RWPE1 (cell line): ENCODE measurements at regions of chr2 and their contacts with region 1.

Region 1: GRCh38 chr2:186605041-186605440 is 15.2 kb downstream of the ITGAV start:
- DNase-seq: no peak
- H3K27ac ChIP-seq: no peak overlapping the region
- CTCF ChIP-seq: no peak

Region 2: DNA sequence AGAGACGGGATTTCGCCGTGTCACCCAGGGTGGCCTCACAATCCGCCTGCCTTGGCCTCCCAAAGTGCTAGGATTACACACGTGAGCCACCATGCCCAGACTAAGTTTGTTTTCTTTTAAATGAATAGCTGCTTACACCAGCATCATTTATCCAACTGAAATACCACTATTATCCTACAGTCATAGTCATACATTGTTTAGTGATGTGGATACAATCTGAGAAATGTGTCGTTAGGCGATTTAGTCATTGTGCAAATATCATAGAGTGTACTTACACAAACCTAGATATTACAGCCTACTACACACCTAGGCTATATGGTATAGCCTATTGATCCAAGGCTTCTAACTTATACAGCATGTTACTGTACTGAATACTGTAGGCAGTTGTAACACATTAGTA is 108.6 kb before region 1 on chr2:
- CTCF ChIA-PET with region 1: no interaction called
- POLR2A ChIA-PET with region 1: no interaction called
- DNase-seq: no peak
- H3K27ac ChIP-seq: no peak overlapping the region
- CTCF ChIP-seq: no peak

Region 3: DNA sequence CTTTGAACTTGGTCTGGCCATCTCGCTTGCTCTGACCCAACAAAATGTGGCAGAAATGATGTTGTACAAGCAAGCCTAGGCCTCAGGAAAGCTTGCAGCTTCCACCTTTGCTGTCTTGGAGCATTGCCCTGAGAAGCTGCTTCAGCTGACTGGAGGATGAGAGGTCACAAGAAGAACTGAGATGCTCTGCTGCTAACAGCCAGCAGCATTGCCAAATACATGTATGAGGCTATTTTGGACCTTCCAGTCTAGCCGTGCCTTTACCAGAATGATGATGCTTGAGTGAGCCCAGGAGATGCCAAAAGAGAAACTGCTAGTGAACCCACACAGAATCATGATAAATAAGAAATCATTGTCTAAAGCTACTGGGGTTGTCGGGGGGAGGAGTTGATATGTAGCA is 28.4 kb before region 1 on chr2:
- CTCF ChIA-PET with region 1: no interaction called
- POLR2A ChIA-PET with region 1: no interaction called
- DNase-seq: no peak
- H3K27ac ChIP-seq: no peak overlapping the region
- CTCF ChIP-seq: no peak

Region 4: GRCh38 chr2:186664385-186665043 is 59.5 kb after region 1 on chr2:
- CTCF ChIA-PET with region 1: no interaction called
- POLR2A ChIA-PET with region 1: no interaction called
- DNase-seq: no peak
- H3K27ac ChIP-seq: no peak overlapping the region
- CTCF ChIP-seq: no peak

Region 5: GRCh38 chr2:186683341-186683740 is 78.3 kb after region 1 on chr2:
- CTCF ChIA-PET with region 1: no interaction called
- POLR2A ChIA-PET with region 1: no interaction called
- DNase-seq: no peak
- H3K27ac ChIP-seq: no peak overlapping the region
- CTCF ChIP-seq: no peak

Region 6: DNA sequence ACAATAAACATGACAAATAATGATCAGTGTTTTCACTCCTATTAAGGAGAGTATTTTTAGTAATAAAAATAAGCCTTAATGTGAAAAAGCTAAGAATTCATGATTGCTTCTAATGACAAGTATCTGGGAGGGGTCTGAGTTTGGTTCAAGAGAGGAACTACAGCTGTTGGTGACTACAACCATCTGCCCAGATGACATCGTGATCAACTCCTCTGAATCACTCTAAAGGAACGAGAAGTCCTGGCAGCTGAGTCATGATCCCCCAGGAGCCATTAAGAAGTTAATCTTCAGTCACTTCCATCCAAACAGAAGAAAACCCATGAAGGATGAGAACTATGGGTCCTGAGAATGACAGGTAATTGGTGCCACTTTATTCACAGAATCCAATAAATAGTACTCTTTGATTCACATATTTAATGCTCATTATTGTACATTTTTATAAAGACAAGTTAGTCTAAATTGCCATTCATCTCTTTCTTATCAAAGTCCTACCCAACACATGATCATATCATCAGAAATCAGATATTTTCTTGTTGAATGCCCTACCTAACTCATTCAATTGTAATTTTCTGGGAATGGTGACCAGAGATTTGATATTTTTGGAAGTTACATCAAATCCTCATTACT is 942.4 kb after region 1 on chr2:
- CTCF ChIA-PET with region 1: interaction called, 10 read pairs
- POLR2A ChIA-PET with region 1: no interaction called
- DNase-seq: peak; percentile 38
- H3K27ac ChIP-seq: no peak overlapping the region
- CTCF ChIP-seq: no peak